Panc1 (cell line): ENCODE measurements at regions of chrX and their contacts with region 1.

Region 1: DNA sequence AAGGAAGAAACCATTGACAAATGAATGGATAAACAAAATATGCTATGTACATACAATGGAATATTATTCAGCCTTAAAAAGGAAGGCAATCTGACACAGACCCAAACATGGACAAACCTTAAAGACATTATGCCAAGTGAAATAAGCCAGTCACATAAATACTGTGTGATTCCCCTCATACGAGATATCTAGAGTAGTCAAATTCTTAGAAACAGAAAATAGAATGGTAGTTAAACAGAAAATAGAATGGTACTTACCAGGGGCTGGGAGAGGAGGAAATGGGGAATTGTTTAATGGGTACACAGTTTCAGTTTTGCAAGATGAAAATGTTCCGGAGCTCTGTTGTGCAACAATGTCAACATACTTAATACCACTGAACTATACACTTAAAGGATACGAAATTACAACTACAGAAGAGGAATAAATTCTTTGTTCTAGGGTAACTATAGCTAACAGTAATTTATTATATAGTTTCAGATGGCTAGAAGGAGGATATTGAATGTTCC is 47.8 kb upstream of the DUSP21 start:
- DNase-seq: no peak
- ATAC-seq: no peak
- H3K4me3 ChIP-seq: no peak overlapping the region
- H3K27ac ChIP-seq: no peak overlapping the region
- H3K4me1 ChIP-seq: no peaks in the 10 kb centered on the region
- H3K27me3 ChIP-seq: no peaks in the 10 kb centered on the region
- CTCF ChIP-seq: no peak

Region 2: DNA sequence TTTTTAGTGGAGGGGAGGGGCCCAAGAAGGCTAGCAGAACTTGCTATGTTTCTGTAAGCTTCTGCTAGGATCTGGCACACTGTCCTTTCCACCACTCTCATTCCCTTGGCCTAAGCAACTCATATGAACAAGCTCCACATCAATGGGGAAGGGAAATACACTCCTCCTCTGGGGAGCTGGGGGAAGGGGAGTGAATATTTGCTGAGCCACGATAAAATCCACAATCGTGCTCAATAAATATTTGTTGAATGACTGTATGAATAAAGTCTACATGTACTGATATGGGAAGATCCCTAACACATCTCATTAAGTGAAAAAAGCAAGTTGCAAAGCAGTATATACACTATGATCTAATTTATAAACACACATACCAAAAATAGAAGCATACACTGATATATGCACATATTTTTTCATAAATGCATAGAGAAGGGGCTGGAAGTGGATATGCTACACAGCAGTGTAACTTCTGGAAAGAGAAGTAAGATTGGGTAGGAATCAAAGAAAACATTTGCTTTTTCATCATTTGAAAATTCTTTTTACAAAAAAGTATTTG is 356.7 kb before region 1 on chrX:
- CTCF ChIA-PET with region 1: no interaction called
- POLR2A ChIA-PET with region 1: no interaction called
- in situ Hi-C with region 1: no loop called
- intact Hi-C with region 1: no loop called
- DNase-seq: no peak
- ATAC-seq: peak; percentile 76
- H3K4me3 ChIP-seq: no peak overlapping the region
- H3K27ac ChIP-seq: no peak overlapping the region
- H3K4me1 ChIP-seq: no peaks in the 10 kb centered on the region
- H3K27me3 ChIP-seq: no peaks in the 10 kb centered on the region
- CTCF ChIP-seq: no peak

Region 3: DNA sequence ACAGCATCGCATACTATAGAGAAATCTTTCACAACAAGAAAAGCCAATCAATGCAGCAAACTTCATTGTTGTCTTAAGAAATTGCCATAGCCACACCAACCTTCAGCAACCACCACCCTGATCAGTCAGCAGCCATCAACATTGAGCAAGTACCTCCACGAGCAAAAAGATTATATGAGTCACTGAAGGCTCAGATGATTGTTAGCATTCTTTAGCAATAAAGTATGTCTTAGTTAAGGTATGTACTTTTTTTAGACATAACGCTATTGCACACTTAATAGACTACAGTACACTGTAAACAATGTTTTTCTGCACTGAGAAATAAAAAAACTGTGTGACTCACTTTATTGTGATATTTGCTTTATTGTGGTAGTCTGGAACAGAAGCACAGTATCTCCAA is 215.5 kb before region 1 on chrX:
- CTCF ChIA-PET with region 1: interaction called, 10 read pairs
- POLR2A ChIA-PET with region 1: no interaction called
- in situ Hi-C with region 1: no loop called
- intact Hi-C with region 1: no loop called
- DNase-seq: peak; percentile 45
- ATAC-seq: no peak
- H3K4me3 ChIP-seq: no peak overlapping the region
- H3K27ac ChIP-seq: no peak overlapping the region
- H3K4me1 ChIP-seq: no peaks in the 10 kb centered on the region
- H3K27me3 ChIP-seq: no peaks in the 10 kb centered on the region
- CTCF ChIP-seq: no peak

Region 4: DNA sequence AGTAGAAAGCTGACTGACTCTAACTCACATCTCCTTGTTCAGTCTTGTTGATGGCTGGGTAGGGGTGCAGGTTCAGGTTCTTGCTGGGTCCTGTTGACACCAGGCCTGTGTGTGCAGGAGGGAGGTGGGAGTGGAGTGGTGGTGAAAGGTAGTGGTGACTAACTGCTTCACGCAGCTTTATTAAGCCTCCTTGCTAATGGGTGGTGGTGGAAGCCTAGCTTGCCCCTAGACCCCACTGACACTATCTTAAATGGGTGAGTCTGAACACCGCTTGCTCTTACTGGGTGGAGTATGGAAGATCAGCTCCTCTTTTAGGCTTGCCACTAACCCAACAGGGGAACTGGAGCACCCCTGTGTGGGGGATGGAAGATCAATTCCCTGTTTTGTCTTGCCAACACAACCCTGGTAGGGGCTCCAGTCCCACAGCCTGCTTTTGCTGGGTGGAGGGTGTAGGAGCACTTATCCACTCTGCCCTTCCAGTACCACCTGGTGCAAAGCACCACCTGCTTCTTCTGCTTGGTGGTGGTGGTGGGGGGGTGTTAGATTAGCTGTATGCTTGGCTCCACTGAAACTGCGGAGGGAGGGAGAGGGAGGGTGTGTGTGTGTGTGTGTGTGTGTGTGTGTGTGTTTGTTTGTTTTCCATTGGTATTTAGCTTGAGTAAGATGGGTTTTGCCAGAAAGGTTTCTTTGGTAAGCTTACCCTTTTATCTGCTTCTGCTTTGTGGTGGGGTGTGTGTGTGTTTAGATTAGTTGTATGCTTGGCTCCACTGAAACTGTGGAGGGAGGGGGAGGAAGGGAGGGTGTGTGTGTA is 102.6 kb after region 1 on chrX:
- CTCF ChIA-PET with region 1: no interaction called
- POLR2A ChIA-PET with region 1: no interaction called
- in situ Hi-C with region 1: no loop called
- intact Hi-C with region 1: no loop called
- DNase-seq: no peak
- ATAC-seq: no peak; the same call in 1 of the 2 replicates
- H3K4me3 ChIP-seq: no peak overlapping the region
- H3K27ac ChIP-seq: no peak overlapping the region
- H3K4me1 ChIP-seq: peaks cover 4% of the 10 kb centered on the region; the same call in 1 of the 2 replicates
- H3K27me3 ChIP-seq: no peaks in the 10 kb centered on the region
- CTCF ChIP-seq: no peak

Region 5: DNA sequence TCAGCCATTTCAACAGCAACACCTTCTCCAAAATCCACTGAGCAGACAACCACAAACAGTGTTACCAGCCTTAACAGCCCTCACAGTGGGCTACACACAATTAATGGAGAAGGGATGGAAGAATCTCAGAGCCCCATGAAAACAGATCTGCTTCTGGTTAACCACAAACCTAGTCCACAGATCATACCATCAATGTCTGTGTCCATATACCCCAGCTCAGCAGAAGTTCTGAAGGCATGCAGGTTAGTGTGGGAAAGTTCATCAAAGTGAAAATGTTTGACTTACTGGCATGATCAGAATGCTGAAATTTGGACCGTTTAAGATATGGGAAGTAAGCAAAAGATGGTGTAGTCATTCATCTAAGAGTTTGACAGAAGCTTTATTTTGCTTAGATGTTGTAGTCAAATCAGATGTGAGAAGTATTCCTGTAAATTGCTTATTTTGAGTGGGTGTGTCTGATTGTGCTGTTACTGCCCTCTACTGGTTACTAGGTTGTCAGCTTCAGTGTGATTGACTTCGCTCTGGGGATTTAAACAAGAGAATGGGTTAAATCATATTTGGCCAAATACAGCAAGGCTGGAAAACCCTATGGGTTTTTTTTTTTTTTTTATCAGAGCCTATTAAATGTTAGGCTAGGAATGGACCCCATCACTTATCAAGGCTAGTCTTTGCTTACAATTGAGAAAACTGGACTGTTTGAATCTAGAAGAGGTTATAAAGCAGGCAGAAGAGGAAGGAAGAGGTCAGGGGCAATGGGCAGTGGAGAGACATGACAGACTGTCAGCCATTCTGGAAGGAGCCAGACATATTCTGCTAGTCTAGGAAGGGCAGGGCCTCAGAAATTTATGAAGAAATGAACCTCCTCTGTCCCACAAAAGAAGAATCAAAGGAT is 274.4 kb after region 1 on chrX:
- CTCF ChIA-PET with region 1: interaction called, 10 read pairs
- POLR2A ChIA-PET with region 1: no interaction called
- in situ Hi-C with region 1: no loop called
- intact Hi-C with region 1: no loop called
- DNase-seq: peak; percentile 41
- ATAC-seq: no peak
- H3K4me3 ChIP-seq: no peak overlapping the region
- H3K27ac ChIP-seq: no peak overlapping the region
- H3K4me1 ChIP-seq: no peaks in the 10 kb centered on the region; the same call in 1 of the 2 replicates
- H3K27me3 ChIP-seq: no peaks in the 10 kb centered on the region
- CTCF ChIP-seq: peak; percentile 69